MCF 10A (cell line): ENCODE measurements at regions of chr3 and their contacts with region 1.

Region 1: DNA sequence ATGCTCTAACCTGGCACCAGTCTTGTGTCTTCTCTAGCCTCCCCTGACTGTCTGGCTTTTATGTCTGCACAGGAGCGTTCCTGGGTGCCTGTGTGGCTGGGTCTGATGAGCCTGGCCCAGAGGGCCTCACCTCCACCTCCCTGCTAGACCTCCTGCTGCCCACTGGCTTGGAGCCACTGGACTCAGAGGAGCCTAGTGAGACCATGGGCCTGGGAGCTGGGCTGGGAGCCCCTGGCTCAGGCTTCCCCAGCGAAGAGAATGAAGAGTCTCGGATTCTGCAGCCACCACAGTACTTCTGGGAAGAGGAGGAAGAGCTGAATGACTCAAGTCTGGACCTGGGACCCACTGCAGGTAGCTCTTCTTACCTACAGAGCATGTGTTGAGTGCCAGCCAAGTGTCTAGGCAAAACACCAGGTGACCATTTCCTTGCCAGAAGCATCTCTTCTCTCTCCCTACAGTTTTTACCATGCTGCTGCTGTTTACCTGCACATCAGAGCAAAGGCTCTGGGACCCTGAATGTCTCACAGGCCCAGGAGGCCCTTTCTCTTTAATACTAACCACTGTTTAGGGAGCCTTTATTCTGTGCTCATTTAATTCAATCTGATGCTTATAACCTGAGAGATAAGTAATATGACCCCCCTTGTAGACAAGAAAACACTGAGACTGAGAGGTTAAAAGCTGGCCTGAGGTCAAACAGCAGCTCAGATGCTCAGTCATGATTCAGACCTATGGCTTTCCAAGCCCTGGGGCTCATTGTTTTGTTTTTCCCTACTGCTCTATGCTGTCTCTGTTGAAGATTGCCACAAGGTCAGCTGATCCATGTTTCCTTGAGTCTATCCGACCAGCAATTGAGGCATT is 10.4 kb downstream of the PODXL2 start:
- DNase-seq: peak; percentile 56
- H3K4me3 Mint-ChIP-seq: no peak overlapping the region
- H3K27ac Mint-ChIP-seq: peak overlapping the region; percentile 35
- H3K4me1 Mint-ChIP-seq: peaks cover 11% of the 10 kb centered on the region
- H3K27me3 Mint-ChIP-seq: no peaks in the 10 kb centered on the region
- CTCF ChIP-seq: no peak

Region 2: DNA sequence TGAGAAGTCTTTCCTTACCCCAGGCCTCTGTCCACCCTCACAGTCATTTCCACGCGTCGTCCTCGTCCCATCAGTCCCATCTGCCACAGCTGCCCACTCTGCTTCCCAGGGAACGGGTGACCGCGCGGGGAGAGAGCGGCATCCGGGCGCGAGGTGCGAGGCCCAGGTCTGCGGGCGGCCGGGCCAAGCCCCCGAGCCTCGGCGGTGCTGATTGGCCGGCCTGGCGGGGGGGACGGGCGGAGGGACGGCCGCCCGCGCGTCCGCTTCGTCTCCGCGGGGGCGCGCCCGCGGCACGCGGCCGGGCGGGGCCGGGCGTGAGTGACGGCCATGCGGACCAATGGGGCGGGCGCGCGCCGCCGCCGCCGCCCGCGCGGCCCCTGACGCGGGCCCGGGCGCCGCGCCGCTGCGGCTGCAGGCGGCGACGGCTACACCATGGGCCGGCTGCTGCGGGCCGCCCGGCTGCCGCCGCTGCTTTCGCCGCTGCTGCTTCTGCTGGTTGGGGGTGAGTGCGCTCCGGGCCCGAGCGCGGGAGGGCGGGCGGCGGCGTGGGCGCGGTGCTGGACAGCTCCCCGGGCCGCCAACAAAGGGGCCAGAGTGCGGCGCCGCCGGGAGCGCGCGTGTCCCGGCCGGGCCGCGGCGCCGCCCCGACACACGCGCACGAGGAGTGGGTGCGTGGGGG is 10.5 kb before region 1 on chr3 and contains the start of gene PODXL2:
- CTCF ChIA-PET with region 1: interaction called, 3 read pairs
- POLR2A ChIA-PET with region 1: interaction called, 11 read pairs
- intact Hi-C with region 1: no loop called
- DNase-seq: peak; percentile 26
- H3K4me3 Mint-ChIP-seq: peak within 1 kb of the TSS; percentile 72
- H3K27ac Mint-ChIP-seq: no peak within 1 kb of the TSS
- H3K4me1 Mint-ChIP-seq: peaks cover 8% of the 10 kb centered on the region
- H3K27me3 Mint-ChIP-seq: peaks cover 16% of the 10 kb centered on the region
- CTCF ChIP-seq: no peak
- total RNA-seq, gene PODXL2: 10.1 and 10.4 TPM in 2 replicates